Dendritic cell treated with granulocyte-macrophage colony-stimulating factor and Interleukin-4, amounts not matched to agents 40 ng/mL and 50 ng/mL, for 4 days (primary cell): ENCODE measurements at regions of chr22 and their contacts with region 1.

Region 1: DNA sequence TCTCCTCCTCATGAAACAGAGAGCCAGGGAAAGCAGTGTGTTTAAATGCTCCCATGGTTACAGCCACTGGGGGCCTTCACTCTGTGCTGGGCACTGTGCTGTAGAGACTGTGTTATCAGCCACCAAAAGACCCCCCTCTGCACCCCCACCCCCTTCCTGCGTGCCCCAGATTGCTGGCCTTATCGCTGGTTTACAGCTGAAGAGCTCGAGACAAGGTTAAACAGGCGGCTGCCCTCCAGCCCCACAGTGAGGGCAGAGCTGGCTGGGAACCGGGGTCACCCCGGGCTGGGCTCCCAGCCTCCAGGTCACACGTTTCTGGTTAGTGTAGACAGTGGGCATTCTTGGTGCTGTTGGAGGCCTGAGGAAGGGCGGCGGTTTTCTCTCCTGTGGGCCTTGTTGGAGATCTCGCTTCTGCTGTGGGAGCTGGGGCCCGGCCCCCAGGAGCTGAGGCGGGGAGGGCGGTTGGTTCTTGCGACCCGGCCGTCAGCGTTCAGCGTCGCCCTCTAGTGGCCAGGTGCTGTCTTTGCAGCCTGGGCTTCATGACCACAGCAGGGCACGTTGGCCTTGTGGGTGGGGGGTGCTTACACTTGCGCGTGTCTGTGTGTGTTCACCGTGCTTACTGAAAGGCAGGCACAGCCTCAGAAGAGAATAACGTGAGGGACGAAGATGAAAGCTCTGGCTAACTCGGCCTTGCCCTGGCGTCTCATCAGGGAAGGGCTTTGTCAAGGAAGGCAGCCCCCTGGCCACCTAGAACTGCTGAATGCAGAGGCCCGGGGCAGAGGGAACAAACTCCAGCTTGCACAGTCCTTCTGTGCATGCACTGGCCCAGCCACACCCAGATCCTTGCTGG is 40.8 kb downstream of the TBC1D22A start:
- H3K4me3 Mint-ChIP-seq: no peak overlapping the region
- H3K27ac Mint-ChIP-seq: no peak overlapping the region
- H3K4me1 Mint-ChIP-seq: peaks cover 59% of the 10 kb centered on the region
- H3K27me3 Mint-ChIP-seq: no peaks in the 10 kb centered on the region

Region 2: DNA sequence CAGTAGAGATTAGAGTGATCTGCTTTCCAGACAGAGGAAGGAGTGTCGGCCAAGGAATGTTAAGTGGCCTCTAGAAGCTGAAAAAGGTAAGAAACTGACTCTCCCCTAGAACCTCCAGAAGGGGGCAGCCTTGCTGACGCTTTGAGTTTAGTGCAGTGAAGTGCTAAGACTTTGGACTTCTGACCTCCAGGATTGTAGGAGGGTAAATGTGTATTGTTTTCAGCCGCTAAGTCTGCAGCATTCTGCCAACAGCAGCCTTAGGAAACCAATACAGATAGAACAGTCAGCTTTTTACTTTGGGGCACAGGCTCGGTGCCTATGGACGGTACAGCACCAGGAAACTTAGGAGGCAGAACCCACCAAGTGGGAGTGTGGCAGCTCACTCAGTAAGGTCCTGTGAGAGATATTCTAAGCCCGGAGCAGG is 44.4 kb before region 1 on chr22:
- intact Hi-C with region 1: loop called (anchors 2 kb)
- H3K4me3 Mint-ChIP-seq: no peak overlapping the region
- H3K27ac Mint-ChIP-seq: peak overlapping the region; percentile 30
- H3K4me1 Mint-ChIP-seq: peaks cover 80% of the 10 kb centered on the region
- H3K27me3 Mint-ChIP-seq: no peaks in the 10 kb centered on the region